ENCODE measurements at regions of chr15 and their contacts with region 1.

Region 1: GRCh38 chr15:66619151-66619903 is 53.5 kb upstream of the LCTL start:
- DNase-seq: peak; percentile 77 to 88 (median 86)
- ATAC-seq: peak; percentile 88
- H3K4me3 ChIP-seq: no peak overlapping the region
- H3K4me1 ChIP-seq: peaks cover 31% of the 10 kb centered on the region
- CTCF ChIP-seq: peak; percentile 86

Region 2: DNA sequence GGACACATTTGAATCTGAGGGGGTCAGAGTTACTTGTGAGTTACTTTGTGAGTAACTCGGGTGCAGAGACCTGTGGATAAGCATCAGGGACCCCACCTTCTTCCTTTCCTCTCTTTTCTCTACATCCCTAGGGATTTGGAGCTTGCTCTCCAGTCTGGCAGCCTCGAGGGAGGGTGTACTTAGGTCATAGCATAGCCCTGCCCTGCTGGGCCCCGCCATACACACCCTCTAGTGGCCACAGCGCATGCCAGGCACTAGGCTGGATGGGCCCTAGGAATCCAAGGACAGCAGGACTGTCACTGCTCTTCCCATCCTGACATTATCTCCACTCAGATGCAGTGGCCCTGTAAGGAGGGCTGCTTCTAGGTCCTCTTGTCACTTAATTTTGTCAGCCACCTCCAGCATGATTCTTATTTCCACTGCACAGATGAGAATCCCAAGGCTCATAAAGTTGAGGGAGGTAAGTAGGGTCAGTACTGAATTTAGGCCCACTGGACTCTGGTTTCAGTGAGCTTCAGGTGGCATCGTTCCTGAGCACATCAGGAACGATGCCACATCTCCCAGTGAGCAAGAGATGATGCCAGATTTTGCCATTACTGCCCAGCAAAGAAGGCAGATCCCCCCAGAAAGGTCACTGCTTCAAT is 79.1 kb after region 1 on chr15:
- intact Hi-C with region 1: loop called in 1 of 2 experiments (anchors 10 kb)
- DNase-seq: peak; percentile 71 to 84 (median 82)
- ATAC-seq: peak; percentile 37
- H3K4me3 ChIP-seq: no peak overlapping the region
- H3K4me1 ChIP-seq: peaks cover 5% of the 10 kb centered on the region
- CTCF ChIP-seq: peak; percentile 77

Region 3: DNA sequence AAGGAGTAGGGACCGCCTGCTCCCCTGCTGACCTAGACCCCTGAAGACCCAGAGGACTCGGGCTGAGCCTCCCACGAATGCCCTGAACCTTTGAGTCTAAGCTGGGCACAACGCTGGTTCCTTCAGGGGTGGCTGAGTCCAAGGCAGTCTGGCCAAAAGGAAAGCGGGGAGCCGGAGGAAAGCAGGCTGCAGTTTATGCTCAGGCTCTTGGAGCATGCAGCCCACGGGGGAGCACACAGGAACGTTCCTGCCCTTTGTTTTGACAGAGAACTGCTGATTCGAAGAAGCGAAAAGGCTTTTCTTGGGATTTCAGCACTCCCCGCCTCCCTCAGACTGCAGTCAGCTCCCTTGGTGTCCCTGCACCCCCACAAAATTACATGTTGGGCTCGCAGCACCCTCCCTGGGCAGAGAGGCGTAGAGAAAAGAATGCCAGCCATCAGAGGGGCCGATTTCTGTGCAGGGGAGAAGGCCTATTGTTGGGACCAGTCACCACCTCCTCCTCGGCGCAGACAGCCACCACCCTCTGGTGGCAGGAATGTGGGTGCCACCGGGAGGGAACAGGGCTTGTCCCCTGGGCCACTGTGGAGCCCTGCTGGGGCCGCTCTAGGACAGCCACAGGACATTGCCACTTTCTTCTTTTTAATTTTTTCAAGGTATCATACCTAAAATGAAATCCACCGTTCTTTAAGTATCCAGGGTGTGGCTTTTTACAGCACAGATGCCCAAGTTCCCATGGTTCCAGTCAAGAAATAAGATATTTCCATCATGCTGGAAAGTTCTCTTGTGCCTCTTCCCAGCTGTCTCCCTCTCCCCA is 154.9 kb after region 1 on chr15:
- intact Hi-C with region 1: loop called (anchors 5 to 10 kb)
- DNase-seq: peak; percentile 86 to 94 (median 92)
- ATAC-seq: peak; percentile 81
- H3K4me3 ChIP-seq: no peak overlapping the region
- H3K4me1 ChIP-seq: peaks cover 48% of the 10 kb centered on the region
- CTCF ChIP-seq: peak; percentile 90

Region 4: DNA sequence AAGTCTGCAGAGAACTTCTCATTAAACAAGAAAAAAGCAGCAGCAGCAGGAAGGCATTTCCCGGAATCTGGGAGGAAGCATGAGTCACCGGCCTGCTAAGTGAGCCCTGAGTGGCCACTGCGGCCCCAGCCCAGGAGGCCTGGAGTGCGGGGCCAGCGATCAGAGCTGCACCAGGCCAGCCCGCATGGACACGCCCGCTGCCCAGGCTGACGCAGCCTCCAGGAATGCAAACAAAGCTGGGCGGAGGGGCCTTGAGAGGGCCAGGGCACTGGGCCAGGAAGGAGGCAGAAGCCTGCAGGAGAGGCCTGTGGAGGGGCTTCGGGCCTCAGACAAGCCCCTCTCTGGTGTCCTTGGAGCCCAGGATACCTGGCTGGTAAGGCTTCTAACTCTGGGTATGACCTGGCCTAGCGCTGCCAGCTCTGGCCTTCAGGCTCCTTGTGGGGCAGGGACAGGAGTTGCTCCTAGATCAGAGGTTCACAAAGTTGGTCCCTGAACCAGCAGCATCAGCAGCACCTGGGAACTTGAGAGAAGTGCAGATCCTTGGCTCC is 183.9 kb after region 1 on chr15:
- intact Hi-C with region 1: no loop called
- DNase-seq: peak; percentile 83 to 90 (median 89)
- ATAC-seq: peak; percentile 99
- H3K4me3 ChIP-seq: no peak overlapping the region
- H3K4me1 ChIP-seq: peaks cover 16% of the 10 kb centered on the region
- CTCF ChIP-seq: no peak

Region 5: DNA sequence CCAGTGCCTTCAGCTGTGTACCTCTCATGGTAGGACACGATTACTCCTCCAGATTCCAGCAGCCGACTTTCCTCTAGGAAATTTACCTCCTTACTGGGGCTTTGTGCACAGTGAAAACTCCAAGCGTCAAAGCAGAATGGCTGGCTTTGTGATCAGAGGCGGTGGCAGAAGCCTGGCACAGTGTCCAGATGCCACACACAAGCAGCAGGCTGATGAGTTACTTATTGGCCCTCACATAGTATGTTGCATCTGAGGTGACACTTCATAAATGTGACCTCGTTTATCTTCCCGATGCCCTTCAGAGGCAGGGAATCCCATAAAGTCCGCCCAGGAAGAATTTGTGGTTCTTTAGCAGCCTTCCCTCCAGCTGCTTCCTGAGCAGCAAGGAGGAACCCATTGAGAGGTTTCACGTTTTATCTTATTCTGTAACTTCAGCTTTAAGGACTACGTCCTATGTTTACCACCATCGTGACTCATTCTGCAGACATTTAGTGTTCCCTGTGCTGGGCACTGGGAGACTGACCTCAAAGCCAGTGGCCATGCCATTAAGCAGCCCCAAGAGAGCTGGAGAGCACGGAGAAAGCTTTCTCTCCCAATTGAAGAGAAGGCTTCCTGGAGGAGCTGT is 794.6 kb after region 1 on chr15:
- intact Hi-C with region 1: no loop called
- DNase-seq: no peak
- ATAC-seq: no peak
- H3K4me3 ChIP-seq: no peak overlapping the region
- H3K4me1 ChIP-seq: no peaks in the 10 kb centered on the region
- CTCF ChIP-seq: no peak